Activated T-helper 2 cell treated with anti-CD3 and anti-CD28 coated beads, Interferon-gamma antibody, Interleukin-2, Interleukin-4, amounts not matched to agents 10 μg/mL and 5 μg/mL and 100 μg/mL, durations not matched to agents 14 hours and 24 hours and 36 hours (primary cell): ENCODE measurements at regions of chr13 and their contacts with region 1.

Region 1: DNA sequence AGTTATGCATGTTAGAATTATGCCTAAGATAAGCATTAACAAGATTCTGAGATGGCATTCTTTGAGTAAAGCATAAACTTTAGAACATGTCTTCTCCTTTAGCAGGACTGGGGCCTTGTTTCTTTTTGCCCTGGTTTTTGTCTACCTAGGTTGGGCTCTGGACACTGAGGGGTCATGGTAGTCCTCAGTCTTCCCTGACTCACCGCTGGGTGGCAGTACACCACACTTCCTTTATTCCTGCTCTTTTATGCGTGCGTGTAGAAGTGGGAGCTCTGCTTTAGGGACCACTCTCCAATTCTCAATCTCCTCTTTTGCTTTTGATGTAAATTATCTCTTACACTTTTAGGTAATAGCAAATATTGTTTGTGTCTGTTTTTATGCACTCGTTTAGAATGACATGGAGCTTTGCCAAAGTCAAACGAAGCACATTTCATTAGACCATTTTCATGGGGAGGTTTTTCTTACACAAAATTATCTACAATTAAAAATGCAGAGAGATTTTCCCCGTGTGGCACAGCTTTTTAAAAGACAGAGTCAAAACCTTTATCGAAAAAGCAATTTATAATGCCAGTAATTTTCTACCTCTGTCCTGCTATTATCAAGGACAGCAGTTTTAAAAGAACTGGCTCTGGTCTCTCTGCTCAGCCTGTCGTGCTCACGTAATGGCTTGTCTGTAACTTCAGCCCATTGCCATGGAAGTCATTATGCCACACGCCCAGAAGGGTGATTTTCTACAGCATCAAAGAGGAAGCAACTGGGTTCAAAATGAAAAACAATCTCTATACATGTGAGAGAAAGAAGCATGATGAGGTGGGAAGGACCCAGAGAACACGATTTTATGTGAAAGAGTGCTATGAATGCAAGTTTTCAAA is 413.9 kb downstream of the COG6 start:
- DNase-seq: peak; percentile 51
- H3K4me3 Mint-ChIP-seq: no peak overlapping the region
- H3K27ac Mint-ChIP-seq: no peak overlapping the region
- H3K4me1 Mint-ChIP-seq: peaks cover 22% of the 10 kb centered on the region
- H3K27me3 Mint-ChIP-seq: no peaks in the 10 kb centered on the region

Region 2: GRCh38 chr13:39881887-39882286 is 187.5 kb before region 1 on chr13:
- intact Hi-C with region 1: no loop called
- DNase-seq: no peak
- H3K4me3 Mint-ChIP-seq: no peak overlapping the region
- H3K27ac Mint-ChIP-seq: no peak overlapping the region
- H3K4me1 Mint-ChIP-seq: peaks cover 6% of the 10 kb centered on the region
- H3K27me3 Mint-ChIP-seq: no peaks in the 10 kb centered on the region

Region 3: GRCh38 chr13:39976481-39976880 is 92.9 kb before region 1 on chr13:
- intact Hi-C with region 1: no loop called
- DNase-seq: no peak
- H3K4me3 Mint-ChIP-seq: no peak overlapping the region
- H3K27ac Mint-ChIP-seq: no peak overlapping the region
- H3K4me1 Mint-ChIP-seq: no peaks in the 10 kb centered on the region
- H3K27me3 Mint-ChIP-seq: peaks cover 14% of the 10 kb centered on the region

Region 4: DNA sequence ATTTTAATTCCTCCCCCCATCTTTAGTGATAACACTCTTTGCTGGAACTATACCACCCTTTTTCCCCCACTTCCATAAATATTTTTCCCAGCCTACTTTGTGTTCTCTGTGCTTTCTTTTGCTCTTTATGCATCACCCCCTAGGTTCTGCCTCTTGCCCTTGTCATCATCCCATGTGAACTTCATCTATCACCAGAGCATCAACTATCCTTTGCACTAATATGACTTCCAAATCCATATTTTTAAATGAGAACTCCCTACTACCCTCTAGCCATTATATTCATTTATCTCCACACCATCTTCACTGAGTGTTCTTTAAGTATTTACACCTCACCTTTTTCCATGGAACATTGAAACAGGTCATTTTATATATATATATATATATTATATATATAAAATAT is 144.4 kb after region 1 on chr13:
- intact Hi-C with region 1: loop called (anchors 2 kb)
- DNase-seq: no peak
- H3K4me3 Mint-ChIP-seq: no peak overlapping the region
- H3K27ac Mint-ChIP-seq: no peak overlapping the region
- H3K4me1 Mint-ChIP-seq: peaks cover 12% of the 10 kb centered on the region
- H3K27me3 Mint-ChIP-seq: no peaks in the 10 kb centered on the region

Region 5: GRCh38 chr13:40377783-40378182 is 308.4 kb after region 1 on chr13:
- intact Hi-C with region 1: no loop called
- DNase-seq: no peak
- H3K4me3 Mint-ChIP-seq: no peak overlapping the region
- H3K27ac Mint-ChIP-seq: no peak overlapping the region
- H3K4me1 Mint-ChIP-seq: peaks cover 18% of the 10 kb centered on the region
- H3K27me3 Mint-ChIP-seq: no peaks in the 10 kb centered on the region